ENCODE measurements at regions of chr4 and their contacts with region 1.

Region 1: DNA sequence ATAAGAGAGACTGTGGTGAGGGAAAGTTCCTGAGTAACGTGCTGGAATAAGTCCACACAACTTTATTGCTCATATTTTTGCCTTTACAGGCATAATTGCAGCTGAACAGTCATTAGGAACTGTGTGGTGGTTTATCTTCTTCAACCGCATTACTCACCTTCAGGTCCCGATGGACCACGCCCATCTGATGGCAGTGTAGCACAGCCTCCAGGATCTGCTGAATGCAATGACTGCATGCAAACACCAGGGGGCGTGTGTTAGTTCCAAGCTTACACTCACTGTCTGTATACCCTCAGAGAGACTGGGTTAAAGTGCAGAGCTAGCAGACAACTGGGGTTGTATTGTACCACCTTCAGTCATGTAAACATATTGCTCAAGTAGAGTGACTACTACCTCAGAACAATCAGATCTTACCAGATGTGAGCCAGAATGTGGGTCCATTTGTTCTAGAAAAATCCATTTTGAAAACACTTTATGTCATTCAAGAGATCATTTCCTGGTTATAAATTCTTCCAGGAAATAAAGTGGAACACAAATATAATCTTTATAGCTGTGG is 214.0 kb downstream of the CAMK2D start:
- DNase-seq: peak; percentile 96
- ATAC-seq: peak; percentile 100
- H3K4me3 Mint-ChIP-seq: no peak overlapping the region
- H3K27ac Mint-ChIP-seq: peak overlapping the region; percentile 72
- H3K4me1 Mint-ChIP-seq: peaks cover 22% of the 10 kb centered on the region
- H3K27me3 Mint-ChIP-seq: no peaks in the 10 kb centered on the region
- CTCF ChIP-seq: peak; percentile 94

Region 2: GRCh38 chr4:113564493-113564892 is 16.9 kb after region 1 on chr4:
- CTCF ChIA-PET with region 1: interaction called, 18 read pairs
- POLR2A ChIA-PET with region 1: no interaction called
- intact Hi-C with region 1: no loop called
- DNase-seq: no peak
- ATAC-seq: no peak
- H3K4me3 Mint-ChIP-seq: no peak overlapping the region
- H3K27ac Mint-ChIP-seq: peak overlapping the region; percentile 0
- H3K4me1 Mint-ChIP-seq: peaks cover 45% of the 10 kb centered on the region
- H3K27me3 Mint-ChIP-seq: no peaks in the 10 kb centered on the region
- CTCF ChIP-seq: no peak

Region 3: GRCh38 chr4:113684534-113685091 is 137.0 kb after region 1 on chr4:
- CTCF ChIA-PET with region 1: interaction called, 3 read pairs
- POLR2A ChIA-PET with region 1: no interaction called
- intact Hi-C with region 1: loop called (anchors 5 kb)
- DNase-seq: peak; percentile 57
- ATAC-seq: peak; percentile 71
- H3K4me3 Mint-ChIP-seq: no peak overlapping the region
- H3K27ac Mint-ChIP-seq: peak overlapping the region; percentile 94
- H3K4me1 Mint-ChIP-seq: peaks cover 66% of the 10 kb centered on the region
- H3K27me3 Mint-ChIP-seq: no peaks in the 10 kb centered on the region
- CTCF ChIP-seq: no peak

Region 4: GRCh38 chr4:113761620-113762185 is 214.1 kb after region 1 on chr4 and contains the start of gene CAMK2D:
- CTCF ChIA-PET with region 1: interaction called, 20 read pairs
- POLR2A ChIA-PET with region 1: interaction called, 4 read pairs
- intact Hi-C with region 1: loop called (anchors 2 kb)
- DNase-seq: peak; percentile 88
- ATAC-seq: peak; percentile 54
- H3K4me3 Mint-ChIP-seq: peak within 1 kb of the TSS; percentile 98
- H3K27ac Mint-ChIP-seq: peak within 1 kb of the TSS; percentile 98
- H3K4me1 Mint-ChIP-seq: peaks cover 44% of the 10 kb centered on the region
- H3K27me3 Mint-ChIP-seq: no peaks in the 10 kb centered on the region
- CTCF ChIP-seq: no peak
- total RNA-seq, gene CAMK2D: 62.8 to 66.1 TPM

Measured in activated CD8-positive, alpha-beta T cell treated with anti-CD3 and anti-CD28 coated beads for 36 hours (primary cell).